Activated naive CD4-positive, alpha-beta T cell treated with anti-CD3 and anti-CD28 coated beads, Interleukin-2, amount 10 ng/mL, durations not matched to agents 7 days and 5 days (primary cell): ENCODE measurements at regions of chr9 and their contacts with region 1.

Region 1: GRCh38 chr9:4366591-4367330 is 66.9 kb upstream of the GLIS3 start:
- DNase-seq: peak; percentile 46
- H3K4me3 Mint-ChIP-seq: no peak overlapping the region
- H3K27ac Mint-ChIP-seq: no peak overlapping the region
- H3K4me1 Mint-ChIP-seq: no peaks in the 10 kb centered on the region
- H3K27me3 Mint-ChIP-seq: peaks cover 5% of the 10 kb centered on the region

Region 2: DNA sequence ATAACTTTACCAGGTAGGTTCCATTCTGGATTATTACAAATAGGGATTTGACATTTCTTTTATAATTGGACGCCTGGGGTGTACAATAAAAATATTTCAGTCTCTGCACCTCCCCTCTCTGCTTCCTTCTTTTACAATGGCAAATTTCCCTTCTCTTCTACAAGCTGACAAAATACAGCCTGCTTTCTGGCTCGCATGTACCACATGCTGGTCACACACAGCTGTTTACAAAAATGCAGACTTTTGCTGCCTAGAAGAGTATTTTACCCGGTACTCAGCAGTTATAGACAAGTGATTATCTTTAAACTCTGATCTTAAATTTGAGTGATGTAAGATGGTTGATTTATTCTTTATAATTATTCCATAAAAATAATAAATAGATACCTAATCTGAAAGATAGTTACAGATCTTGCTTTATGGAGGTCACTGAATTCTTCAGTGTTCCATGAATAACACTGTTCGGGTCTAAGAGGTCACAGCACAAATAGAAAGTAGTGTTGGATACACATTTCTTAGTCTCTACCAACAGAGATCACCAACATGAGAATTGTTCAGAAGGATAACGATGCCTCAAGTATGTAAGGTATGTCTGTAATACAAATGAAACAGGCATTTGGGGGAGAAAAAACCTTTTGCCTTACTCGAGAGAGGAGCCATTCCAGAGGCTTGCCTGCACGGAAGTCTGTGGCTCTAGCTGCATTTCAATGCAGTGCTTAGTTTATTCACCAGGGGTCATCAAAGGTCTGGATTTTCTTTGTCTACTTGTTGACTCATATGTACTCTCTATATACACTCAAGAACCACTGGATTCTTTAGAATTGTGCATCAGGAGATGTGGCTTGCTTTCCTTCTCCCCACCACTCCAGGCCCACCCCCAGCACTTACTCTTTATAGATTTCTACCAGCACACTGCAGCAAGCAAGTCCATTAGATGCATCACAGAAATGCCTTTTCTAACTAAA is 634.4 kb before region 1 on chr9:
- CTCF ChIA-PET with region 1: interaction called, 14 read pairs
- DNase-seq: peak; percentile 38
- H3K4me3 Mint-ChIP-seq: no peak overlapping the region
- H3K27ac Mint-ChIP-seq: no peak overlapping the region
- H3K4me1 Mint-ChIP-seq: peaks cover 13% of the 10 kb centered on the region
- H3K27me3 Mint-ChIP-seq: no peaks in the 10 kb centered on the region

Region 3: GRCh38 chr9:4315582-4316215 is 51.1 kb before region 1 on chr9:
- CTCF ChIA-PET with region 1: interaction called, 75 read pairs
- DNase-seq: peak; percentile 83
- H3K4me3 Mint-ChIP-seq: no peak overlapping the region
- H3K27ac Mint-ChIP-seq: no peak overlapping the region
- H3K4me1 Mint-ChIP-seq: no peaks in the 10 kb centered on the region
- H3K27me3 Mint-ChIP-seq: peaks cover 12% of the 10 kb centered on the region

Region 4: DNA sequence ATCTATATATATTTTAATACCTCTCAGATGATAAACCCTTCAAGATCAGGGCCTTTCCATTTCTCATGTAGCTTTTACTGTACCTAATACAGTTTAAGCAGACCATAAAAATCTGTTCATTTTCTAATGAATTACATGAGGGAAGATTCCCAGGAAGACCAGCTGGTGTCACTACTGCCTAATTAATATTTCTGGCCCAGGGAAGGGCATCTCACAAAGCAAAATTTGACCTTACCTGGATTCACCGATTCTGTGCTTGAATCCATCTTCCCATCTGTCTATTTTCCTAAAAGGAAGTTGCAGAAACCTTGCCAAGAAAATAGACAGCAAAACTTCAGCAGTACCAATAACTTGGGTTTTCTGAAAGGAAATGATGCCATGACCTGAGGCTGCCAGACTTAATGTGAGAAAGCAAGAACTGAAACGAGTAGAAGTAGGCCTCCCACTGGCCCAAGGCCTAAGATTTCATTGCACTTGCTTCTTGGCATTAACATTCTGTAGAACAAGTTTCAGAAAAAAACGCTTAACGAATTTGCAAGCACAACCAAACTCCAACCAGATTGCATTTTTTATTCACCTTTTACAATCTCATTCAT is 16.1 kb after region 1 on chr9:
- CTCF ChIA-PET with region 1: interaction called, 11 read pairs
- DNase-seq: no peak
- H3K4me3 Mint-ChIP-seq: no peak overlapping the region
- H3K27ac Mint-ChIP-seq: no peak overlapping the region
- H3K4me1 Mint-ChIP-seq: no peaks in the 10 kb centered on the region
- H3K27me3 Mint-ChIP-seq: peaks cover 5% of the 10 kb centered on the region